AG04450 (cell line): ENCODE measurements at regions of chr2 and their contacts with region 1.

Region 1: GRCh38 chr2:162318328-162319180 is at the start of gene IFIH1:
- DNase-seq: peak; percentile 68
- H3K4me3 ChIP-seq: peak within 1 kb of the TSS; percentile 74
- H3K27ac ChIP-seq: no peak within 1 kb of the TSS
- H3K27me3 ChIP-seq: no peaks in the 10 kb centered on the region
- CTCF ChIP-seq: peak; percentile 57
- polyA plus RNA-seq, gene IFIH1: 2.0 and 2.2 TPM in 2 replicates

Region 2: GRCh38 chr2:162328424-162329157 is 10.0 kb after region 1 on chr2:
- CTCF ChIA-PET with region 1: interaction called, 10 read pairs
- POLR2A ChIA-PET with region 1: no interaction called
- DNase-seq: no peak
- H3K4me3 ChIP-seq: no peak overlapping the region
- H3K27ac ChIP-seq: no peak overlapping the region
- H3K27me3 ChIP-seq: peaks cover 5% of the 10 kb centered on the region
- CTCF ChIP-seq: no peak

Region 3: DNA sequence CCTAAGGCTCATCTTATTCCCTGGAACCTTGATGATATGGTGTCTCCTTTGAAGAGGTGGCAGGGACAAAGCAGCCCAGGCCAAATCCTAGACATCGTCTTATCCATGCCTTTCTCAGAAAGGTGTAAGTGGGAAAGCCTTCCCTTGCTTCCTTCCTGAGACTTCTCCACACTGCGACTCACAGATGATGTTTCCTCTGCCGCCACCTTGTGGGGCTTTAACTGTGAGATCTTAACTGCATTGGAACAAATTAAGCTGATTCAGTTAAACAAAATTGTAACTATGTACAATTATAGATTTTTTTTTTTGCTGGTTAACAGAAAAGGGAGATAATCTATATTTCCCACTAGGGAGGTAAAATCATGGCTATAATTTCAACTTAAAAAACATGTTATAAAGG is 15.4 kb after region 1 on chr2:
- CTCF ChIA-PET with region 1: interaction called, 26 read pairs
- POLR2A ChIA-PET with region 1: no interaction called
- DNase-seq: no peak
- H3K4me3 ChIP-seq: no peak overlapping the region
- H3K27ac ChIP-seq: no peak overlapping the region
- H3K27me3 ChIP-seq: no peaks in the 10 kb centered on the region
- CTCF ChIP-seq: peak; percentile 64